ENCODE measurements at regions of chr22 and their contacts with region 1.

Region 1: GRCh38 chr22:40346178-40347118 is at the start of gene ADSL:
- DNase-seq: peak; percentile 94
- ATAC-seq: peak; percentile 87
- H3K4me3 Mint-ChIP-seq: peak within 1 kb of the TSS; percentile 86
- H3K27ac Mint-ChIP-seq: peak within 1 kb of the TSS; percentile 92
- H3K4me1 Mint-ChIP-seq: peaks cover 45% of the 10 kb centered on the region
- H3K27me3 Mint-ChIP-seq: no peaks in the 10 kb centered on the region
- total RNA-seq, gene ADSL: 125 to 172 TPM

Region 2: GRCh38 chr22:39490135-39490798 is 856.2 kb before region 1 on chr22:
- CTCF ChIA-PET with region 1: no interaction called
- POLR2A ChIA-PET with region 1: no interaction called
- intact Hi-C with region 1: loop called in 1 of 2 experiments (anchors 5 kb)
- DNase-seq: peak; percentile 89
- ATAC-seq: peak; percentile 100
- H3K4me3 Mint-ChIP-seq: no peak overlapping the region
- H3K27ac Mint-ChIP-seq: no peak overlapping the region
- H3K4me1 Mint-ChIP-seq: peaks cover 7% of the 10 kb centered on the region
- H3K27me3 Mint-ChIP-seq: no peaks in the 10 kb centered on the region

Region 3: DNA sequence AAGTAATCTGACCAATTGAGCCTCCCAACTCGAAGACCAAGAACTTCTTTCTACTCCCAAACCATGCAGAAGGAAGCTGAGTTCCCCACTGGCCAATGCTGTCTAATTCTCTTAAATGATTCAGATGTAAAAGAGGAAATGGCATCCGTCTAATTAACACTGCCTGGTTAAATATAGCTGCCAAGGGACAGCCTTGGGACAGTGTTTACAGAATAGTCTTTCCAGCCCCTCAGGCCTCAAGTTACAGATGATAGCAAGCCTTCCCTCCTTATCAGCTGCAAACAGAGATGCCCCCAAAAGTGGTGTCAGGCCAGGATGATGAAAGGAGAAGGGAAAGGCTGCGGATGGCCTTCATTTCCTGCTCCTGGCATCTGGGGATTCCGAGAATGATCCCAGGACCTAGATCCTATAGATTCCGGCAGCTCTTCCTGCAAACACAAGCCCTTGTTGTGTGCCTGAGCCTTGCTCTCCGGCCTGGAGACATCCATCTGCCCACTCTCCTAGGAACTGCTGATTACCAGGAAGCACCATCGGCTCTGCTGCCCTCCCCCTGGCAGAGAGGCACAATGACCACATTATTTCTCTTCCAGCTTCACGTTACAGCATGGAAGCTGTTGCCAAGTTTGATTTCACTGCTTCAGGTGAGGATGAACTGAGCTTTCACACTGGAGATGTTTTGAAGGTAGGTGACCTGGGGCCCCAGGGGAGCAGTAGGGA is 399.8 kb before region 1 on chr22:
- CTCF ChIA-PET with region 1: interaction called, 3 read pairs
- POLR2A ChIA-PET with region 1: no interaction called
- intact Hi-C with region 1: loop called in 1 of 2 experiments (anchors 10 kb)
- DNase-seq: no peak
- ATAC-seq: peak; percentile 27
- H3K4me3 Mint-ChIP-seq: peak overlapping the region; percentile 50
- H3K27ac Mint-ChIP-seq: peak overlapping the region; percentile 89
- H3K4me1 Mint-ChIP-seq: peaks cover 96% of the 10 kb centered on the region
- H3K27me3 Mint-ChIP-seq: no peaks in the 10 kb centered on the region

Region 4: GRCh38 chr22:40107851-40108378 is 238.5 kb before region 1 on chr22:
- CTCF ChIA-PET with region 1: no interaction called
- POLR2A ChIA-PET with region 1: no interaction called
- intact Hi-C with region 1: loop called in 1 of 2 experiments (anchors 5 kb)
- DNase-seq: peak; percentile 65
- ATAC-seq: peak; percentile 88
- H3K4me3 Mint-ChIP-seq: peak overlapping the region; percentile 68
- H3K27ac Mint-ChIP-seq: peak overlapping the region; percentile 91
- H3K4me1 Mint-ChIP-seq: peaks cover 80% of the 10 kb centered on the region
- H3K27me3 Mint-ChIP-seq: no peaks in the 10 kb centered on the region

Region 5: GRCh38 chr22:40215266-40215665 is 131.2 kb before region 1 on chr22:
- CTCF ChIA-PET with region 1: no interaction called
- POLR2A ChIA-PET with region 1: no interaction called
- intact Hi-C with region 1: loop called in 1 of 2 experiments (anchors 5 kb)
- DNase-seq: no peak
- ATAC-seq: no peak
- H3K4me3 Mint-ChIP-seq: no peak overlapping the region
- H3K27ac Mint-ChIP-seq: peak overlapping the region; percentile 92
- H3K4me1 Mint-ChIP-seq: peaks cover 86% of the 10 kb centered on the region
- H3K27me3 Mint-ChIP-seq: no peaks in the 10 kb centered on the region

Region 6: DNA sequence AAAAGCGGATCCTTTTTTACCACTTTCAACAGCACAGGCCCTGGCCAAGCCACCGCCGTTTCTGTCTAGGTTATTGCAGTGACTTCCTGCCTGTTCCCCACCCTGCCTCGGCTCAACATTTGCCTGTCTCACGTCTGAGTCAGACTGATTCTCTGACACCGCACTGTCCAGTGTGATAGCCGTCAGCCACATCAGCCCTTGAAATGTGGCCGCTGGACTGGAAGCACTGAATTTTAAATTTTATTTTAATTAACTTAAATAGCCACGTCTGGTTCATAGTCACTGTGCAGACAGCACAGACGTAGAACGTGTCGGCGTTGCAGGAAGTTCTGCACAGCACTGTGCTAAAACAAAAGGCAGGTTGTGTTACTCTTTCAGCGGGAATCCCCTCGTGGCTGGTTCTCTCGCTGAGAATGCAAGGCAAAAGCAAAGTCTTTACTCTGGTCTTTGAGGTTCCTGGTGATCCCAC is 56.4 kb before region 1 on chr22:
- CTCF ChIA-PET with region 1: interaction called, 4 read pairs
- POLR2A ChIA-PET with region 1: interaction called, 3 read pairs
- intact Hi-C with region 1: loop called (anchors 2 kb)
- DNase-seq: peak; percentile 83
- ATAC-seq: peak; percentile 78
- H3K4me3 Mint-ChIP-seq: peak overlapping the region; percentile 63
- H3K27ac Mint-ChIP-seq: peak overlapping the region; percentile 98
- H3K4me1 Mint-ChIP-seq: peaks cover 68% of the 10 kb centered on the region
- H3K27me3 Mint-ChIP-seq: no peaks in the 10 kb centered on the region

Region 7: GRCh38 chr22:40636380-40637182 is 290.1 kb after region 1 on chr22 and contains the start of gene MRTFA:
- CTCF ChIA-PET with region 1: no interaction called
- POLR2A ChIA-PET with region 1: no interaction called
- intact Hi-C with region 1: loop called in 1 of 2 experiments (anchors 1 kb)
- DNase-seq: peak; percentile 100
- ATAC-seq: peak; percentile 96
- H3K4me3 Mint-ChIP-seq: peak within 1 kb of the TSS; percentile 85
- H3K27ac Mint-ChIP-seq: peak within 1 kb of the TSS; percentile 93
- H3K4me1 Mint-ChIP-seq: peaks cover 43% of the 10 kb centered on the region
- H3K27me3 Mint-ChIP-seq: no peaks in the 10 kb centered on the region
- total RNA-seq, gene MRTFA: 41.0 to 43.2 TPM